ENCODE measurements at regions of chr10 and their contacts with region 1.

Region 1: GRCh38 chr10:70221030-70221429 is 12.2 kb downstream of the PPA1 start:
- DNase-seq: no peak
- ATAC-seq: no peak
- H3K4me3 ChIP-seq: no peak overlapping the region
- H3K27ac ChIP-seq: no peak overlapping the region
- H3K4me1 ChIP-seq: peaks cover 11% of the 10 kb centered on the region; the same call in 2 of the 3 replicates
- CTCF ChIP-seq: no peak
- EP300 ChIP-seq: no peak
- POLR2A ChIP-seq: no peak
- RAD21 ChIP-seq: no peak

Region 2: GRCh38 chr10:70233109-70233938 is 12.3 kb after region 1 on chr10 and contains the start of gene PPA1:
- CTCF ChIA-PET with region 1: interaction called, 43 read pairs
- POLR2A ChIA-PET with region 1: interaction called, 4 read pairs
- DNase-seq: peak; percentile 96 to 97
- ATAC-seq: peak; percentile 94 to 97
- H3K4me3 ChIP-seq: peak within 1 kb of the TSS; percentile 91
- H3K27ac ChIP-seq: peak within 1 kb of the TSS; percentile 89 to 90
- H3K4me1 ChIP-seq: peaks cover 26% of the 10 kb centered on the region
- CTCF ChIP-seq: peak; percentile 38
- EP300 ChIP-seq: no peak
- POLR2A ChIP-seq: peak; percentile 80
- RAD21 ChIP-seq: no peak
- polyA plus RNA-seq, gene PPA1: 219 and 273 TPM in 2 replicates

Region 3: DNA sequence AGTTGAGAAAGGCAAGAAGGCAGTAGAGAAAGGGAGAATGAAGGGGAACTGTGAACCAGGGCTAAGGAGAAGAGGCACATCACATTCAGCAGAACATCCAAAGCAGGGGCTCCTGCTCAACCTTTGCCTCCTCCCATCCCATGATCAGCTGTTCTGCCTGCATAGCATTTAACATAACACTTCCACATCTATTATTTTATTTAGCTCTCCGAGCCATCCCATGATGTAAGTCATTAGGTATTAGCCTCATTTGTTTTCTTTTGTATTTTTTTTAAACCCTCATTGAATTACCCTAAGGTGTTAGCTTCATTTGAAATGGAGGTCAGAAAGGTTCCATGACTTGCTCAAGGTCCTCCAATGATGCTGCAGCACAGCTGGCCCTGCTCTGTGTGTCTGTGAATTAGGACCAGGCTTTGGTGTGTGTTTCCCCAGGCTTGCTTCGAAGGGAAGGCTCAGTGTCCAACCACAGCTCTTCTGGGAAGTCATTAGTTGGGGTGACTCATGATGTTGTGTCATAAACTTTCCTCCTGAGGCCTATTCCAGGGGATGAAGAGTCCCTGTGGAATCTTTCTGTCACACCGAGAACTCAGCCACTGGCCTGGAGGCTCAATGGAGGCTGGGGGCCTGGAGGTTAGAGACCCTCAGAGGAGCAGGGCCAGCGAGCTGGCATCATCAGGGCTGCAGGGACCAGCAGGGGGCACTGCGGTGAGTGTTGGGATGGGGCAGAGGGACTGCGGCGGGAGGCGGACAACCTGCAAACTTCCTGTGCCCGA is 46.3 kb after region 1 on chr10:
- CTCF ChIA-PET with region 1: interaction called, 15 read pairs
- POLR2A ChIA-PET with region 1: no interaction called
- DNase-seq: peak; percentile 54 to 73
- ATAC-seq: peak; percentile 83 to 85
- H3K4me3 ChIP-seq: no peak overlapping the region
- H3K27ac ChIP-seq: peak overlapping the region in 1 of 2 experiments; percentile 32; a peak in 1 of 6 replicates
- H3K4me1 ChIP-seq: peaks cover 12% of the 10 kb centered on the region
- CTCF ChIP-seq: peak; percentile 25; the same call in 2 of the 3 replicates
- EP300 ChIP-seq: no peak
- POLR2A ChIP-seq: no peak
- RAD21 ChIP-seq: no peak

Region 4: DNA sequence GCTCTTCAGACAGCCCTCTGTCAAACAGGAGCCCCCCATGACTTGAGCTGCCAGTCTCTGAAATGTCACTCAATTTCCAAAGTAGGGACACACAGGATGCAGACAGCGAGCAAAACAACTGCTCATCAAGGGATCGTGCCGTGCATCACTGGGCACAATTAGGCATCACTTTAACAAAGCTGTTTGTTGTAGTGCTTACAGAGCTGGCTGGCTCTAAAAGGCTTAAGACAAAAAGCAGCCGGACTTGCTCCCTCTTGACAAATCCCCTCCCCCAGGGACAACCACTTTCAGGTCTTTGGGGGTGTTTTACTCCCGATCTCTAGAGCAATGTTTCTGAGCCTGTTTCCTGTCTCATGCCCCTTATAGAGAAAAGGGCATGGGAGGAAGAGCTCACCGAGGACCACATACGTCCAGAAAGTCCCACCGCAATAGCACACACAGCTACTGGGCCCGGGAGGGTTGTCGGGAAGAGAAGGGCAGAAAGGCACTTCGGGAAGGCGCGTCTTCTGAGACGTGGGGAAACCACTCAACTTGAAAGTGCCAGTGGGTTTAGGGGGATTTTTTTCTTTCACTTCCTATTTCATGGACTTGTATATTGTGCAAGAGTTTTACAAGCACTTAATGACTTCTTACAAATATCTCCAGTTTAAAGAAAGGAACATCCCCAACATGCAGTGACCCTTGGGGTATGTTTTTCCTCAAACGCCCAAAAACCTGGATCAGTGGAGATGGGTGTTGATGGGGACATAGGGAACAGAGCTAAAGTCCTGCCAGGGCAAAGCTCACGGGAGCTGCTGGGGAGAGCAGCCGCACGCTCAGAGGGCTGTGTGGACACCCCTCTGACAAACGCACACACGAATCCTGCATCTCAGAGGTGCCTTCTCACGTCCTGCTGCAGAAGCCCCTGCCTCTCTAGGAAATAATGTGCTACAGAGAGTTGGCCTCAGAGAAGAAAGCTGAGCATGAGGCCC is 134.3 kb after region 1 on chr10:
- CTCF ChIA-PET with region 1: interaction called, 554 read pairs
- POLR2A ChIA-PET with region 1: interaction called, 4 read pairs
- DNase-seq: no peak
- ATAC-seq: no peak
- H3K4me3 ChIP-seq: no peak overlapping the region
- H3K27ac ChIP-seq: no peak overlapping the region
- H3K4me1 ChIP-seq: peaks cover 36% of the 10 kb centered on the region
- CTCF ChIP-seq: no peak
- EP300 ChIP-seq: no peak
- POLR2A ChIP-seq: no peak
- RAD21 ChIP-seq: no peak

Region 5: GRCh38 chr10:70461215-70461986 is 240.4 kb after region 1 on chr10:
- CTCF ChIA-PET with region 1: interaction called, 10 read pairs
- POLR2A ChIA-PET with region 1: no interaction called
- DNase-seq: peak; percentile 64 to 87
- ATAC-seq: peak; percentile 88 to 91
- H3K4me3 ChIP-seq: no peak overlapping the region
- H3K27ac ChIP-seq: no peak overlapping the region
- H3K4me1 ChIP-seq: peaks cover 5% of the 10 kb centered on the region
- CTCF ChIP-seq: peak; percentile 84
- EP300 ChIP-seq: no peak
- POLR2A ChIP-seq: no peak
- RAD21 ChIP-seq: peak; percentile 88 to 92

Measured in A549 (cell line).